ENCODE measurements at regions of chr6 and their contacts with region 1.

Region 1: GRCh38 chr6:127900935-127901334 is at the start of gene THEMIS:
- DNase-seq: peak; percentile 9 to 80 (median 73)
- ATAC-seq: peak; percentile 85
- H3K4me3 ChIP-seq: peak within 1 kb of the TSS; percentile 77
- H3K4me3 Mint-ChIP-seq: peak within 1 kb of the TSS; percentile 92 to 100 (median 98)
- H3K27ac ChIP-seq: peak within 1 kb of the TSS; percentile 77
- H3K27ac Mint-ChIP-seq: peak within 1 kb of the TSS; percentile 88 to 100 (median 95)
- H3K4me1 ChIP-seq: peaks cover 8 to 38% of the 10 kb centered on the region in 2 donors
- H3K4me1 Mint-ChIP-seq: peaks cover 22 to 72% (median 56%) of the 10 kb centered on the region in 7 donors
- H3K27me3 ChIP-seq: no peaks in the 10 kb centered on the region
- H3K27me3 Mint-ChIP-seq: no peaks in the 10 kb centered on the region
- total RNA-seq, gene THEMIS: 51.3 to 97.3 (median 54.7) TPM

Region 2: GRCh38 chr6:127879685-127880084 is 21.2 kb before region 1 on chr6:
- CTCF ChIA-PET with region 1: interaction called, 4 read pairs
- POLR2A ChIA-PET with region 1: interaction called, 3 read pairs
- intact Hi-C with region 1: loop called in 1 of 2 experiments (anchors 2 kb)
- DNase-seq: no peak
- ATAC-seq: no peak
- H3K4me3 ChIP-seq: no peak overlapping the region
- H3K4me3 Mint-ChIP-seq: peak overlapping the region; percentile 43 to 85 (median 73)
- H3K27ac ChIP-seq: no peak overlapping the region
- H3K27ac Mint-ChIP-seq: peak overlapping the region; percentile 6 to 90 (median 74)
- H3K4me1 ChIP-seq: peaks cover 54 to 58% of the 10 kb centered on the region in 2 donors
- H3K4me1 Mint-ChIP-seq: peaks cover 28 to 89% (median 75%) of the 10 kb centered on the region in 7 donors
- H3K27me3 ChIP-seq: no peaks in the 10 kb centered on the region
- H3K27me3 Mint-ChIP-seq: no peaks in the 10 kb centered on the region

Region 3: GRCh38 chr6:127918506-127919427 is 17.8 kb after region 1 on chr6:
- CTCF ChIA-PET with region 1: interaction called, 10 read pairs
- POLR2A ChIA-PET with region 1: interaction called, 21 read pairs
- intact Hi-C with region 1: loop called (anchors 1 kb)
- DNase-seq: peak in 7 of 9 donors; percentile 68 to 85 (median 80)
- ATAC-seq: peak; percentile 86
- H3K4me3 ChIP-seq: peak overlapping the region; percentile 79
- H3K4me3 Mint-ChIP-seq: peak overlapping the region; percentile 74 to 96 (median 88)
- H3K27ac ChIP-seq: peak overlapping the region; percentile 50
- H3K27ac Mint-ChIP-seq: peak overlapping the region; percentile 83 to 98 (median 93)
- H3K4me1 ChIP-seq: peaks cover 58 to 65% of the 10 kb centered on the region in 2 donors
- H3K4me1 Mint-ChIP-seq: peaks cover 33 to 95% (median 85%) of the 10 kb centered on the region in 7 donors
- H3K27me3 ChIP-seq: no peaks in the 10 kb centered on the region
- H3K27me3 Mint-ChIP-seq: no peaks in the 10 kb centered on the region

Region 4: DNA sequence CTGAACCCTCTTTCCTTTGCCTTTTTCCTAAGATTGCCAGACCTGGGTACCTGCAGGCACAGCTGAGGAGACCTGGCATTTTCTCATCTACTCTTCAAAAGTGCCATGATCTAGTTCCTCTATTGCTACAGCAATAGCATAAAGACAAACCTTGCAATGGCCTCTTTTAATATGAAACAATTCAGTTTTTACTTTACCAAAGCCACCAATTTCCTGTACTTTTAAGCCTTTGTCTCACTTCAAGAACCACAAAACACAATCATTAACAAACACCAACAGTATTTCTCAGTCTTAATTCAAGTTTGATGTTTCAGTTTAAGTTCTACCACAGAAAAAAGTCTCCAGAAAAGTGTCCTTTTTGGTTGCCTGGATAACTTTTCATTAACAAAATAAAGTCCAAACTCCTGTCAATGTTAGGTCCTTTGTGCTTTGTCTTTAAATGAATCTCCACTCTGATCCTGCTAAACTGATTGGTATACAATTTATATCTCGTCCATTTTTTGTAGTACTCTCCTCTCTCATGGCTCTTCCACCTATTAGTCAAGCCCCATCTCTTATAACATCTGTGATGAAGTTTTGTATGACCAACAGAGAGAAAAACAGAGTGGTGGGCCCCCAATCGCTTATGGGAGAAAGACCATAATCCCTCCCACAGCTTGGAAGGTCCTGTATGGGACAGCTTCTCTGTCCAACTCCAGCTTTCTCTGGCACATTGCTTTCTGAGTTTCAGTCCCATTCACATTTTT is 50.4 kb after region 1 on chr6:
- CTCF ChIA-PET with region 1: interaction called, 5 read pairs
- POLR2A ChIA-PET with region 1: interaction called, 9 read pairs
- intact Hi-C with region 1: loop called (anchors 1 kb)
- DNase-seq: peak in 7 of 9 donors; percentile 31 to 78 (median 69)
- ATAC-seq: peak; percentile 77
- H3K4me3 ChIP-seq: peak overlapping the region; percentile 21
- H3K4me3 Mint-ChIP-seq: peak overlapping the region; percentile 70 to 84 (median 79)
- H3K27ac ChIP-seq: peak overlapping the region; percentile 30
- H3K27ac Mint-ChIP-seq: peak overlapping the region; percentile 84 to 94 (median 91)
- H3K4me1 ChIP-seq: peaks cover 35 to 42% of the 10 kb centered on the region in 2 donors
- H3K4me1 Mint-ChIP-seq: peaks cover 32 to 74% (median 62%) of the 10 kb centered on the region in 7 donors
- H3K27me3 ChIP-seq: no peaks in the 10 kb centered on the region
- H3K27me3 Mint-ChIP-seq: no peaks in the 10 kb centered on the region

Region 5: GRCh38 chr6:128259730-128260685 is 359.1 kb after region 1 on chr6:
- CTCF ChIA-PET with region 1: no interaction called
- POLR2A ChIA-PET with region 1: interaction called, 6 read pairs
- intact Hi-C with region 1: loop called in 1 of 2 experiments (anchors 5 kb)
- DNase-seq: peak in 7 of 9 donors; percentile 11 to 42 (median 29)
- ATAC-seq: peak; percentile 74
- H3K4me3 ChIP-seq: peak overlapping the region; percentile 30
- H3K4me3 Mint-ChIP-seq: peak overlapping the region; percentile 67 to 91 (median 84)
- H3K27ac ChIP-seq: peak overlapping the region; percentile 45
- H3K27ac Mint-ChIP-seq: peak overlapping the region; percentile 74 to 93 (median 90)
- H3K4me1 ChIP-seq: peaks cover 12 to 15% of the 10 kb centered on the region in 2 donors
- H3K4me1 Mint-ChIP-seq: peaks cover 15 to 46% (median 28%) of the 10 kb centered on the region in 7 donors
- H3K27me3 ChIP-seq: no peaks in the 10 kb centered on the region
- H3K27me3 Mint-ChIP-seq: peaks cover 0 to 3% (median 0%) of the 10 kb centered on the region in 5 donors

Measured in naive thymus-derived CD4-positive, alpha-beta T cell (primary cell).